BJ (cell line): ENCODE measurements at regions of chr13 and their contacts with region 1.

Region 1: DNA sequence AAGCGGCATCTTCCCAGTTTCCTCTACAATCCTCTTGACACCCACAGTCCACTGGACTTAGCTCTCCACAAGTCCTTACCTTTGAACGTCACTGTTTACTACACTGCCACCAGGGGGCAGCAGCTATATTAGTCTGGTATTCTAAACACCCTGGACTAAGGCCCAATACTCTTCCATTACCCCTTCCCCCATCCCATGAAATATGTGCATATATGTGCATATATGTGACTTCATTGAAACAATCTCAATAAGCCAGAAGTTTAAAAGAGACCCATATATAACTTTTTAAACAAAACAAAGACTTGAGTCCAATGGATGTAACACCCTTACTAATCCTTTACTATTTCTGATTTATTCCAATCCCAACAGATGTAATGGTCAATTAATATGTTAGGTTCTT is 15.5 kb downstream of the GGACT start:
- DNase-seq: no peak
- H3K4me3 ChIP-seq: no peak overlapping the region
- H3K27me3 ChIP-seq: no peaks in the 10 kb centered on the region
- CTCF ChIP-seq: peak; percentile 85

Region 2: DNA sequence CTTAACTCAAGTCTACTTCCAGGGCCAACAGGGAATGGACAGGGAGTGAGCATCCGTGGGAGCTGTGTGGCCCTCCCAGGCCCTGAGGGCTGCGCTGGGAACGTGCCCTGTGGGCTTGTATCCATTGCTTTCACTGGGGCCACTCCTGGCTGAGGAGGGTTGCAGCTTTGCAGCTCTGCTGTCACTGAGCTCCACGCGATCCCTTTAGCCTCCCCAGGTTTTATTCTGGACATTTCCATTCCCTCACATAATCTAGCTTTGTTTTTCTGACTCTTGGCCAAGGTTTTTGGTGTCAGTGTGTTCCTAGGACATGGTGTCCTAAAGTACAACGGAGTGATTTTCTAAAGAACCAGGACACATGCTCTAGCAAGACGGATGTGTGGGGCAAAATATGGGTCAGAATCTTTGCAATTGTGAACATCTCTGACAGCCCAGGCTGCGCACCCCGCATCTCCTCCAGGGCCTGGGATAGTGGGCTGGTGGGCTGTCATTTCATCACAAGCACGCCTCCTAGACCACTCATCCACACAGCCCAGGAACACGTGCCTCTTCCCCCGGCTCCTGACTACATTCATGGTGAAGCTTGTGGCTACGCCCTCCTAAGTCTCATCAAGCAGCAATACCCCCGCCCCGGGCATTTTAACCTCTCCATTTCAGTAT is 12.5 kb before region 1 on chr13:
- CTCF ChIA-PET with region 1: interaction called, 26 read pairs
- POLR2A ChIA-PET with region 1: no interaction called
- DNase-seq: no peak
- H3K4me3 ChIP-seq: no peak overlapping the region
- H3K27me3 ChIP-seq: no peaks in the 10 kb centered on the region
- CTCF ChIP-seq: no peak

Region 3: DNA sequence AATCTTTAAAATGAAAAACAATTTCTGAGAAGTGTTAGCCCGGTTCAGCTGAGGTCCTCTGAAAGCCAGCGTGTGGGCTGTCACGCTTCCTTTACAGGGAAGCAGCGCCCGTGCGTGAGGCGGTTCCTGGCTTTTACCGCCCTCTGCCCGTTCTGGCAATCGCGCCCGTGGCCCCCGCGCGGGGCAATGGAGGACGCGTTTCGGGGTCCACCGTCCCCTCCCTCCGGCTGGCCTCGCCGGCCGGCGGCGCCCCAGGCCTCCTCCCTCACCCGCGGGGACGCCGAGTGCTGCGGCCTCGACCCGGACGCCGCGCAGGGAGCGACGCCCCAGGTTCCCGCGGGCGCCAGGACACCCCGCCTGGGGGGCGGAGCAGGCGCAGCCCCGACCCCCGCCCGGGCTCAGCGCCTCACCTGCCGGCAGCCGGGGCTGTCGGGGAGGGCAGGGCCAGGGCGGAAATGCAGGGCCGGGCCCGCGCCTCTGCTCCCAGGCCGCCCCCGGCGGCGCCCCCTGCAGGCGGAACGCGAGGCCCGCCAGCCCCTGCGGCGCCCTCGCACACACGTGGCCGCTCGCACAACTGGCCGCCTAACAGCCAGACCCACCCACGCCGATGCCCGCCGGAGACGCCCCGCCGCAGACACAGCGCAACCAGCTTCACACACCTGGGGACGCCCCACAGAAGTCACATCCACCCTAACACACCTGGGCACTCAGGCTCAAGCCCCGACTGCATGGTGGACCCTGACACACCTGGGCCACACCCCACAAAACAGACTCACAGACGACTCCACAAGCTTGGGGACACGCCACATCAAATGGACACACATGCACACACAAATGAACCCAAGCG is 15.4 kb after region 1 on chr13 and contains the start of gene GGACT:
- CTCF ChIA-PET with region 1: interaction called, 35 read pairs
- POLR2A ChIA-PET with region 1: no interaction called
- DNase-seq: no peak
- H3K4me3 ChIP-seq: peak within 1 kb of the TSS; percentile 56
- H3K27me3 ChIP-seq: no peaks in the 10 kb centered on the region; the same call in 1 of the 2 replicates
- CTCF ChIP-seq: peak; percentile 38
- polyA plus RNA-seq, gene GGACT: 7.0 and 8.5 TPM in 2 replicates

Region 4: GRCh38 chr13:100734194-100734720 is 161.1 kb after region 1 on chr13:
- CTCF ChIA-PET with region 1: no interaction called
- POLR2A ChIA-PET with region 1: no interaction called
- DNase-seq: no peak
- H3K4me3 ChIP-seq: no peak overlapping the region
- H3K27me3 ChIP-seq: no peaks in the 10 kb centered on the region
- CTCF ChIP-seq: no peak

Region 5: GRCh38 chr13:101098873-101099272 is 525.8 kb after region 1 on chr13:
- CTCF ChIA-PET with region 1: interaction called, 15 read pairs
- POLR2A ChIA-PET with region 1: no interaction called
- DNase-seq: no peak
- H3K4me3 ChIP-seq: no peak overlapping the region
- H3K27me3 ChIP-seq: no peaks in the 10 kb centered on the region
- CTCF ChIP-seq: no peak

Region 6: DNA sequence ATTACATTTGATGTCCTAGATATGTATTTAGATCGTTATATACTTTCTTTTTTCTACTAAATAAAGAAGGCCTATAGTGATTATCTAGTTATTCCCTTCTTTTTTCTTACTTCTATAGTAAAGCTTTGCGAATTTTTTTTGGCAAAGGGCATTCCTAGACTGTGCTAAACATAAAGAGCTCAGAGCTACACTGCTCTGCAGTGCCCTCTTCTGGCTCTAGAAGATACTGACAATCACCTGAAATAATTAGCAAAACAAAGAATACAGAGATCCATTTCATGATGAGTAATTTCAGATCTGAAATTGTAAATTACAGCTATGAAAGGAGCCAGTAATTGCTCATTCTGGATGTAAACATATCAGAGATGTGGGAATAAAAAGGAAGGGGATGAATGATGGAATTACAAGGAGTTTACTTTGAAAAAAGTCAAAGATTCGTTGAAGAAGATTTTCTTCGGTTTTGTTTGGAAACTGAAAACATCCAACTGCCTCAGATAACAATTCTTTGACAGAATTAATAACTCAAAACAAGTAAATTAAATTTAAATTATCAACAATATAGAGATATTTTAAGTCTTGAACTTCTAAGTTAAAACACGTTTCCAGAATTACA is 554.7 kb after region 1 on chr13:
- CTCF ChIA-PET with region 1: interaction called, 10 read pairs
- POLR2A ChIA-PET with region 1: no interaction called
- DNase-seq: no peak
- H3K4me3 ChIP-seq: no peak overlapping the region
- H3K27me3 ChIP-seq: no peaks in the 10 kb centered on the region
- CTCF ChIP-seq: peak; percentile 83